ENCODE measurements at regions of chr6 and their contacts with region 1.

Region 1: DNA sequence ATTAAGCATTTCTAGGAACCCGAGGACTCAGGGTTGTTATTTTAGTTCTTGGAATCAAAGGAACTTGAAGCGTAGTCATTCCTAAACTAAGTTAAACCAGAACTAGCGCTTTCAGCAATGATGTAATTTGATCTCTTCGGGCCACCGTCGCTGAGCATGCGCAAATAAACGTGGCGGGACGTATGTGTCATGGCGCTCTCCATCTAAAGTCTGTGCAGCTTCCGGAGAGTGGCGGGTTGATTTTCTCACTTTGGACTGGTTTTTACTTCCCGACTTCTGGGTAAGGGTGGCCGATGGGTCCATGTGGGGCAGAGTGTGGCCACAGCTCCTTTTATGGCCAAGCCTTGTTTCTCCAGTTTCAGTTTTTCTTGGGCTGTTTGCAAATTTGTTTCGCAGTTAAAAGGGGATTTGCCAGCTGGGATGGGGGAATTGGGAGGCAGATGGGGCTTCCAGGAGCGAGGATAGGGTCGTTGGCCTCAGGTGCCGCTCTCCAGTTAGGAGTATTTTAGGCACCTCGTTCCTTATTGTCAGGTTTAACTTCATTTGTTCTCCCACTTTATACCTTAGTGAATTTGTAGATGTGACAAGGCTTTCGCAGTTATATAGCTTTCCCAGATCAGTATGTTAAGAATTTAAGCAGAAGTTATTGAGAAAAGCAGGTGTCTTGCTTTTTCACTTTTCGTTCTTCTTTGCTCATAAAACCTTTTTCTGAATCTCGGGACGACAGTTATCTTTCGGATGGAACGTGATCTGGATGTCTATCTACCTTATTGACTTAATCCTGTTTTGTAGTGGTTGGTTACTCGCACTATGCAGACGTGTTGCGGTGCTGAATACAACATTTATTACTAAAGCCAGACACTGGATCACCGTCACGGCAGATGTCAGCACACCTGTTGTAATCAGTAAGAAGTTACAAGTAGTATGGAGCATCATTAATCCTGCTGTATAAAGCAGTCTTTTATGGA is at the start of gene CDKAL1:
- DNase-seq: peak; percentile 83 to 98 (median 91)

Region 2: DNA sequence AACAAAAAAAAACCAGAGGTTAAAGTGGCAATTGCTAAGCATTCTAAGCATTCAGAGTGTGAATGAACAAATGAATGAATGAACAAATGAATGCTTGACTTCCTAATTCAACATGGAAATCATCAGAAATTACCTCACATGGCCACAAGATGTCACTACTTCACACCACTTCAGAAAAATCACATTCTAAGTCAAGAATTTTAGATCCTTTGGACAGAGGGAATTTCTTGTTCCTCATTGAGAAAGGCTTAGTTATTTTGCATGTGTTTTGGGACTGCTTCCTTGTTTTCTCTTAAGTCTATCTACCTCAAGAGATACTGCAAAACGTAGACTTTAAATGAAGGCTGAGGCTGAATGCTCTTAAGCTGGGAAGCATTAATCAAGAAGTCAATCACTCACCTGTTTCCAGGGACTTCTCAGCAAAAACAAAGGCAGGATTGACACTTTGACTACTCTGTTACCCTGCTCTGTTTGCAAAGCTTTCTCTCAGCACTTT is 442.5 kb before region 1 on chr6:
- intact Hi-C with region 1: loop called (anchors 2 kb)
- DNase-seq: no peak

Region 3: DNA sequence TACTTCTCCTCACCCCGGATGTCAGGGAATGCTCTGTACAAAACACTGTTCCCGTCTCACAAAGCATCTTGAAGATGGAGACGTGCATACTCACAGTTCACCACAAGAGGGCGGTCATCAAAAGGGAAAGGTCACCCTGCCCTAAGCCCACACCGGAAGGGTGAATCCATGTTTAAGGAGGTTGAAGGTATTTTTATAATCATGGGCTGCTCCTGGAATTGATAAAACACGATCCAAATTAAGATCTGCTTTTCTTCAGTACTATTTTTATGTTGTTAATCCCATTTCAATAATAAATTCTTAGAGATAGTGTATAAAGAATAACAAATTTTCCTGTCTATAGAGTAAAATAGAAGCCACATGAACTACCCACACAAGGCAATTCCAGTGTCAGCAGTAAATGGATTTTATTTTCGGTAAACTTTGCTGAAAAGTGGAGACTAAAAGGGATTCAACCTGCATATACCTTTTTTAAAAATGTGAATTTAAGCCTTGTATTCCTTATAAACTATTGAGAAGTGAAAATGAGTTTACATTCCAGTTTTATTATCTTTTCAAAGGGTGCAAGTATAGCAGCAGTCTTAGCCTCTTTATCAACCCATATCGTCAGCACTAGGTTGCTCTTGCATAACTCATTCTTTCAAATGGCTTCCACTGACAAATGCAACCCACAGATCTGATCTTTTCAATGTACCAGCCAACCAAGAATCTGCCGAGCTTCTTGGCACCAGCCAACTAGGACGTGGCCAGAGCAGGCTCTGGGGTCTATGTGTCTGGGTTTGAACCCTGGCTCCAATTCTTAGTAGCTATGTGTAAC is 242.6 kb before region 1 on chr6:
- intact Hi-C with region 1: loop called (anchors 2 kb)
- DNase-seq: peak in 8 of 10 donors; percentile 40 to 91 (median 74)

Region 4: DNA sequence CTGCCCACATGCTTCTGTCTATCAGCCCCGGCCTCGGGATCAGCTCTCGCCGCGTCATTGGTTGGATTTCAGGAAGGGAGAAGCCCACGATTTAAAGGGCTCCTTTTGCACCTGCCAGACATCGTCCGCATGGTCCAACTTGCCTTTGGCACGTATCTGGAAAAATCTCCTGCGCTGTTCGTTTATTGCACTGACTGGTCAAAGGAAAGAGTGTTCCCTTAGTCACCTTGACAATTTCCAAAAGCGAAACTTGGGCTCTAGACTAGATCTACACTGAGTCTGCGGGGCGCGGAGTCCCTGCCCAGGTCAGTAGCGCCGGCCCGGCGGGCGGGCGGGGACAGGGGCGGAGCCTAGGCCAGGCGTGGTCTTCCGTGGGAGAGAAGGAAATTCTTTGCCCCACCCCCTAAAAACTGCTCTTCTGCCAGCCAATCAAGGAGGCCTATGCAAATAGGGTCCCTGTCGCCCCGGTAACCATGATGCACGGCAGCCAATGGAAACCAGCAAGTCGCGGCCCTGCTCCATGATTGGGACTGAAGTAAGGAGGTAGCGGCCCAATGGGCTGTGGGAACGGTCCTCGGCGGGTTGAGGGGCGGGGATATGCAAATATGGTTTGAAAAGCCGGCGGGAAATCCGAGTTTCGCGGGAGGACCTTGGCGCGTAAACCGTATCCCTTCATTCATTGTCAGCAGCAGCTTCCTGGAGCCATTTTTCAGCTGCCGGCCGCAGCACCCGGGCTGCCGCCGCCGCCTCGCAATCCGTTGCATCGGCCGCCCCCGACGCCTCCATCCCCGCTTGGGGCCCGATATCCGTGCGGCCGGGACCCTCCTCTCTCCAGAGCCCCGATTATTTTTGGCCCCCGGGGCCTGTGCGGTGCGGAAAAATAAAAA is 133.1 kb before region 1 on chr6 and contains the start of gene E2F3:
- intact Hi-C with region 1: loop called (anchors 5 kb)
- DNase-seq: peak; percentile 95 to 100 (median 99)

Region 5: DNA sequence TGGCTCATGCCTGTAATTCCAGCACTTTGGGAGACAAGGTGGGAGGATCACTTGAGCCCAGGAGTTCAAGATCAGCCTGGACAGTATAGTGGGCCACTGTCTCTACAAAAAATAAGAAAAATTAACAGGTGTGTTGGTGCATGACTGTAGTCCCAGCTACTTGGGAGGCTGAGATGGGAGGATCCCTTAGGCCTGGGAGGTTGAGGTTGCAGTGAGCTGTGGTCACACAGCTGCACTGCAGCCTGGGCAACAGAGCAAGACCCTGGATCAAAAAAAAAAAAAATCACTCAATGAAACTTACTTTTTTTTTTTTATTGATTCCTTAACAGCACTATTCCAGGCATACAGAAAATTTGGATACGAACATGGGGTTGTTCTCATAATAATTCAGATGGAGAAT is 13.7 kb after region 1 on chr6:
- intact Hi-C with region 1: no loop called
- DNase-seq: no peak

Region 6: DNA sequence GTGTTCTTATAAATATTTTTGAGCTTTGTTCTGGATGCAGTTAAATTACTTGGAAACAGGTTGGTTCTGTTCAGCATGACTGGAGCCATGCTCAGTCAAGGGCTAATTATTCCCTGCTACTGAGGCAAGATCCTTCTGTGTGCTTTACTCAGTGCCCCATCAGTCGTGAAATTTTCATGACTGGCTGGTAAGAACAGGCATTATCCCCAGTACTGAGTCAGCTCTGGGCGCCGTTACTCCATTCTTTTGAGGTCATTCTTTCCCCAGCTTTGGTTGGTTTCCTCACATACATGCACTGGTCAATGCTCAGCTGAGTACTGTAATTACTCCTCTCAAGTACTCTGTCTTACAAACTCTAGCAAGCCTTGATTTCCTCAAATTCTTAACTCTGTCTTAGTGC is 71.0 kb after region 1 on chr6:
- intact Hi-C with region 1: no loop called
- DNase-seq: no peak